Calu3 (cell line): ENCODE measurements at regions of chr3 and their contacts with region 1.

Region 1: DNA sequence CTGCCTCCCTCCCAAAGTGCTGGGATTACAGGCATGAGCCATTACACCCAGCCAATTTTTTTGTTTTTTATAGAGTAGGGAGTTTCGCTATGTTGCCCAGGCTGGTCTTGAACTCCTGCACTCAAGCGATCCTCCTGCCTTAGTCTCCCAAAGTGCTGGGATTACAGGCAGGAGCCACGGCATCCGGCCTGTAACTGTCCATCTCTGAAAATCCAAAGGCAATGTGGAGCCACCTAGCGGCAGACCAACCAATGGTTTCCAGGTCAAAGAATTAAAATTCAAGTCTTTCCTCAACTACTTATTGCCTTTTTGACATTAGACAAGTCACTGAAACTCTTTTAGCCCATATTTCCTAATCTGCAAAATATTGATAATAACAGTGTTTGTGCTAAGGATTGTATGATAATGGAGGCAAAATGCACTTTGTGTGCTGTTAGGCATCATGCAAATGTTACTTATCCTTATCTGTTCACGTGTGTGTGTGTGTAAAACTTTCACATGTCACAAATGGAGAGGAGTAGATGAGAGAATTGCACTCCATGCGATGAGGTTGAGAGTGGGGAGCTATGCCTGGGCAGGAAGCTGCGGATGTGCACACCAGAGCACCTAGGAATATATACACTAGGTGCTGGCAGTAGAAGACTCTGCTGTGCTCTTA is 48.7 kb downstream of the COL8A1 start:
- DNase-seq: peak; percentile 80
- H3K4me3 Mint-ChIP-seq: no peak overlapping the region
- H3K27ac Mint-ChIP-seq: no peak overlapping the region
- H3K4me1 Mint-ChIP-seq: no peaks in the 10 kb centered on the region
- H3K27me3 Mint-ChIP-seq: no peaks in the 10 kb centered on the region
- CTCF ChIP-seq: peak; percentile 61

Region 2: DNA sequence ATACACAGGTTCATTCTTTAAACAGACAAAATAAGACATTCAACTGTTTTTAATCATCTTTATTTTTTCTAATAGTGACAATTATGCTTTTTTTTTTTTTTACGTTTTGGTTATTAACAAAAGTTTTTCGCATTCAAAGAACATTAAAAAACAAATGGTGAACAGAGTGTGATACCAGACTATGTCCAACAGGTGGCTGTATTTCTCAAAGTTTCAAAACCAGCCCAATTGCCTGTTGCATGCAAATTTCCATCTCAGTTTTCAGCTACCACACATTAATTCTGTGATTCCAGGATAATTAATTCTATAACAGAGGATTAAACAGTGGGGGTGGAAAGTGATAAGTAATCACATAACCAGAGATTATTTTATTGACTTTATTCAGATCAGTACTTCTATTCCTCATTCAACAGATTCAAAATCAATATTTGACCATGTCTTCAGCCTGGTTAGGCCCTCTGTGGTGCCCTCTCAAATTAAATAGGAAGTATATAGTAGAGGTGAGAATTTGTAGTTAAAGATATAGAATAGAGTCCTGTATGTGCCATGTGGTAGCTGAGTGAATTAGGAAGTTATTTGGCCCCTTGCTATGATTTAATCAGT is 663.4 kb before region 1 on chr3:
- CTCF ChIA-PET with region 1: interaction called, 4 read pairs
- intact Hi-C with region 1: loop called (anchors 10 kb)
- DNase-seq: peak; percentile 7
- H3K4me3 Mint-ChIP-seq: no peak overlapping the region
- H3K27ac Mint-ChIP-seq: no peak overlapping the region
- H3K4me1 Mint-ChIP-seq: no peaks in the 10 kb centered on the region
- H3K27me3 Mint-ChIP-seq: no peaks in the 10 kb centered on the region
- CTCF ChIP-seq: peak; percentile 30

Region 3: GRCh38 chr3:99114565-99115291 is 572.4 kb before region 1 on chr3:
- CTCF ChIA-PET with region 1: no interaction called
- intact Hi-C with region 1: loop called (anchors 2 kb)
- DNase-seq: peak; percentile 43
- H3K4me3 Mint-ChIP-seq: no peak overlapping the region
- H3K27ac Mint-ChIP-seq: no peak overlapping the region
- H3K4me1 Mint-ChIP-seq: no peaks in the 10 kb centered on the region
- H3K27me3 Mint-ChIP-seq: no peaks in the 10 kb centered on the region
- CTCF ChIP-seq: peak; percentile 54

Region 4: GRCh38 chr3:99499235-99500158 is 187.6 kb before region 1 on chr3:
- CTCF ChIA-PET with region 1: interaction called, 6 read pairs
- intact Hi-C with region 1: loop called (anchors 1 kb)
- DNase-seq: peak; percentile 56
- H3K4me3 Mint-ChIP-seq: no peak overlapping the region
- H3K27ac Mint-ChIP-seq: no peak overlapping the region
- H3K4me1 Mint-ChIP-seq: peaks cover 7% of the 10 kb centered on the region
- H3K27me3 Mint-ChIP-seq: no peaks in the 10 kb centered on the region
- CTCF ChIP-seq: peak; percentile 25

Region 5: DNA sequence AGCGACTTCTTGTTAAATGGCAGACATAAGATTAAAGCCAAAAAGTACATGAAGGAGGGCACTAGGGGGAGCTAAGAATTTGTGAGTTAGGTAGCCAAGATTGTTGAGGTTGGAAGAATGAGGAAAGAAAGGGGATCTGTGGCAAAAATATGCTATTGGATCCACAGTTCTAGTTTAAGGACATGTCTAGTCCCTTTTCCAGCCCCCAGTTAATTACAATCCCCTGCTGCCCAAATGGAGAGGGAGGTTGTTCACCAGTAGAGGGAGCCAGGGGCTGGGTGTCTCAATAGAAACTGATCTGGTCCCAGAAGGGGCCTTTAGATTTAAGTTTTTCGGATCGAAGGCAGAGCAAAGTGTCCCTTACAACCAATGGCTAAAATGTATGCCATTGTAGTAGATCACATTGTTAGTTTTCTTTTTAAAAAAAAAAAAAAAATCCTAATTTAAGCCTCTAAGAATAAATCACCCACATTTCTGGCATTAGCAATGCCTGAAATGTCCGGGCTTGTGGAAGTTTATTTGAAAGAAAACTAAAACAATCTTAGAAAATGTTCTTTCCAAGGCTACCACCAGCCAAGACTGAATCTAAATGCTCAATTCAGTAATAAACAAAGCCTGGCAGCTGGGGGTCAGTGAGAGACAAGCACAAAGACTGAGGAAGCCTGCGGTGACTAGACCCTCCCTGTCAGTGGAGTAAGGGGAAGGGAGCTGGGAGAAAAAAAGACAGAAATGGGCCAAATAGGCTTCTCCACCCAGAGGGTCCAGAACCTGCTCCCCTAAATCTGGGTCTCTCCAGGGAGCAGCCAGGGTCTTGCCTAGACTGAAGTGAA is 41.6 kb before region 1 on chr3:
- CTCF ChIA-PET with region 1: interaction called, 3 read pairs
- intact Hi-C with region 1: loop called (anchors 1 kb)
- DNase-seq: peak; percentile 15
- H3K4me3 Mint-ChIP-seq: no peak overlapping the region
- H3K27ac Mint-ChIP-seq: no peak overlapping the region
- H3K4me1 Mint-ChIP-seq: peaks cover 25% of the 10 kb centered on the region
- H3K27me3 Mint-ChIP-seq: no peaks in the 10 kb centered on the region
- CTCF ChIP-seq: peak; percentile 76

Region 6: GRCh38 chr3:99920481-99921376 is 233.6 kb after region 1 on chr3:
- CTCF ChIA-PET with region 1: no interaction called
- intact Hi-C with region 1: no loop called
- DNase-seq: no peak
- H3K4me3 Mint-ChIP-seq: no peak overlapping the region
- H3K27ac Mint-ChIP-seq: peak overlapping the region; percentile 79
- H3K4me1 Mint-ChIP-seq: peaks cover 36% of the 10 kb centered on the region
- H3K27me3 Mint-ChIP-seq: no peaks in the 10 kb centered on the region
- CTCF ChIP-seq: no peak